CD8-positive, alpha-beta memory T cell (primary cell): ENCODE measurements at regions of chr13 and their contacts with region 1.

Region 1: GRCh38 chr13:102596147-102597028 is at the start of gene TPP2:
- DNase-seq: peak; percentile 96 to 99 (median 98)
- H3K4me3 ChIP-seq: peak within 1 kb of the TSS; percentile 98
- H3K4me3 Mint-ChIP-seq: peak within 1 kb of the TSS; percentile 97 to 100 (median 98)
- H3K27ac ChIP-seq: peak within 1 kb of the TSS; percentile 100
- H3K27ac Mint-ChIP-seq: peak within 1 kb of the TSS; percentile 99 to 100 (median 100)
- H3K4me1 ChIP-seq: peaks cover 48% of the 10 kb centered on the region
- H3K4me1 Mint-ChIP-seq: peaks cover 66 to 74% (median 73%) of the 10 kb centered on the region in 3 donors
- H3K27me3 ChIP-seq: no peaks in the 10 kb centered on the region
- H3K27me3 Mint-ChIP-seq: peaks cover 0 to 1% of the 10 kb centered on the region in 2 donors
- total RNA-seq, gene TPP2: 74.0 to 77.7 TPM

Region 2: GRCh38 chr13:102097708-102098107 is 498.7 kb before region 1 on chr13:
- CTCF ChIA-PET with region 1: no interaction called
- POLR2A ChIA-PET with region 1: no interaction called
- DNase-seq: no peak
- H3K4me3 ChIP-seq: no peak overlapping the region
- H3K4me3 Mint-ChIP-seq: no peak overlapping the region
- H3K27ac ChIP-seq: no peak overlapping the region
- H3K27ac Mint-ChIP-seq: no peak overlapping the region
- H3K4me1 ChIP-seq: no peaks in the 10 kb centered on the region
- H3K4me1 Mint-ChIP-seq: no peaks in the 10 kb centered on the region
- H3K27me3 ChIP-seq: no peaks in the 10 kb centered on the region
- H3K27me3 Mint-ChIP-seq: peaks cover 0 to 1% of the 10 kb centered on the region in 2 donors

Region 3: GRCh38 chr13:102555917-102556553 is 40.4 kb before region 1 on chr13:
- CTCF ChIA-PET with region 1: no interaction called
- POLR2A ChIA-PET with region 1: no interaction called
- DNase-seq: peak in 2 of 5 donors; percentile 1 to 19
- H3K4me3 ChIP-seq: no peak overlapping the region
- H3K4me3 Mint-ChIP-seq: no peak overlapping the region
- H3K27ac ChIP-seq: no peak overlapping the region
- H3K27ac Mint-ChIP-seq: no peak overlapping the region
- H3K4me1 ChIP-seq: no peaks in the 10 kb centered on the region
- H3K4me1 Mint-ChIP-seq: peaks cover 3 to 5% (median 5%) of the 10 kb centered on the region in 3 donors
- H3K27me3 ChIP-seq: no peaks in the 10 kb centered on the region
- H3K27me3 Mint-ChIP-seq: peaks cover 0 to 3% of the 10 kb centered on the region in 2 donors

Region 4: DNA sequence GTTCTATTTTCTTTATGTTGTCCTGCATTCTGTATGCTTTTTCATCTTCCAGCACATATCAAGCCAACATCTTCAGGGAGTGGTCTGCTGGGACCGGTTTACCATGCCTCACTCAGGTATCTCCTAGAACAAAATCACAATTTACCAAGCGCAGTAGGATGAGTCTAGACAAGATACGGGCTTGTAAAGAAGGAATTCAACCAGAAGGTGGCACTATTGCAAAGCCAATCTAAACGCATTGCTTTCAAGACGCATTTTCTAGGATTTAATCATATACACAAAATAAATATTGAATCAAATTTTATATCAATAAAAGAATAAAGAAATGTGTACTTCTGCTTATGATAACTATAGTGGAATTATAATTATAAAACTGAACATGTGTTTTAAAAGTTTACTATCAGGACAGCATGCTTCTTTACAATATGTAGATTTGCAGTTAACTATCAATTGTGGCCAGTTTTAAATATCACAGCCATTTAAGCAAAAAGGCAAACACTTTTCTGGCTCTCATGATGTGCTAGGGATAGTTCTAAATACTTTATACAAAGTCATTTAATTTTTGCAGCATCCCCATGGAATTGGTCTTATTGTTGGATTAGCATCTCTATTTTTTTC is 15.7 kb before region 1 on chr13:
- CTCF ChIA-PET with region 1: interaction called, 72 read pairs
- POLR2A ChIA-PET with region 1: interaction called, 10 read pairs
- DNase-seq: peak in 2 of 5 donors; percentile 44 to 54
- H3K4me3 ChIP-seq: no peak overlapping the region
- H3K4me3 Mint-ChIP-seq: no peak overlapping the region
- H3K27ac ChIP-seq: no peak overlapping the region
- H3K27ac Mint-ChIP-seq: peak overlapping the region in 1 of 8 donors; percentile 32
- H3K4me1 ChIP-seq: peaks cover 8% of the 10 kb centered on the region
- H3K4me1 Mint-ChIP-seq: peaks cover 13 to 17% (median 16%) of the 10 kb centered on the region in 3 donors
- H3K27me3 ChIP-seq: no peaks in the 10 kb centered on the region
- H3K27me3 Mint-ChIP-seq: peaks cover 13 to 19% of the 10 kb centered on the region in 2 donors

Region 5: GRCh38 chr13:102620516-102620915 is 24.1 kb after region 1 on chr13:
- CTCF ChIA-PET with region 1: interaction called, 17 read pairs
- POLR2A ChIA-PET with region 1: interaction called, 3 read pairs
- DNase-seq: no peak
- H3K4me3 ChIP-seq: no peak overlapping the region
- H3K4me3 Mint-ChIP-seq: no peak overlapping the region
- H3K27ac ChIP-seq: no peak overlapping the region
- H3K27ac Mint-ChIP-seq: peak overlapping the region in 2 of 8 donors; percentile 65 to 78
- H3K4me1 ChIP-seq: no peaks in the 10 kb centered on the region
- H3K4me1 Mint-ChIP-seq: peaks cover 10 to 22% (median 13%) of the 10 kb centered on the region in 3 donors
- H3K27me3 ChIP-seq: no peaks in the 10 kb centered on the region
- H3K27me3 Mint-ChIP-seq: no peaks in the 10 kb centered on the region

Region 6: GRCh38 chr13:102773441-102774215 is 177.2 kb after region 1 on chr13 and contains the start of gene TEX30:
- CTCF ChIA-PET with region 1: interaction called, 5 read pairs
- POLR2A ChIA-PET with region 1: interaction called, 21 read pairs
- DNase-seq: peak; percentile 80 to 91 (median 90)
- H3K4me3 ChIP-seq: peak within 1 kb of the TSS; percentile 87
- H3K4me3 Mint-ChIP-seq: peak within 1 kb of the TSS; percentile 88 to 96 (median 92)
- H3K27ac ChIP-seq: peak within 1 kb of the TSS; percentile 77
- H3K27ac Mint-ChIP-seq: peak within 1 kb of the TSS; percentile 65 to 98 (median 95)
- H3K4me1 ChIP-seq: peaks cover 5% of the 10 kb centered on the region
- H3K4me1 Mint-ChIP-seq: peaks cover 35 to 52% (median 49%) of the 10 kb centered on the region in 3 donors
- H3K27me3 ChIP-seq: no peaks in the 10 kb centered on the region
- H3K27me3 Mint-ChIP-seq: peaks cover 0 to 3% of the 10 kb centered on the region in 2 donors
- total RNA-seq, gene TEX30: 58.5 to 64.3 TPM

Region 7: DNA sequence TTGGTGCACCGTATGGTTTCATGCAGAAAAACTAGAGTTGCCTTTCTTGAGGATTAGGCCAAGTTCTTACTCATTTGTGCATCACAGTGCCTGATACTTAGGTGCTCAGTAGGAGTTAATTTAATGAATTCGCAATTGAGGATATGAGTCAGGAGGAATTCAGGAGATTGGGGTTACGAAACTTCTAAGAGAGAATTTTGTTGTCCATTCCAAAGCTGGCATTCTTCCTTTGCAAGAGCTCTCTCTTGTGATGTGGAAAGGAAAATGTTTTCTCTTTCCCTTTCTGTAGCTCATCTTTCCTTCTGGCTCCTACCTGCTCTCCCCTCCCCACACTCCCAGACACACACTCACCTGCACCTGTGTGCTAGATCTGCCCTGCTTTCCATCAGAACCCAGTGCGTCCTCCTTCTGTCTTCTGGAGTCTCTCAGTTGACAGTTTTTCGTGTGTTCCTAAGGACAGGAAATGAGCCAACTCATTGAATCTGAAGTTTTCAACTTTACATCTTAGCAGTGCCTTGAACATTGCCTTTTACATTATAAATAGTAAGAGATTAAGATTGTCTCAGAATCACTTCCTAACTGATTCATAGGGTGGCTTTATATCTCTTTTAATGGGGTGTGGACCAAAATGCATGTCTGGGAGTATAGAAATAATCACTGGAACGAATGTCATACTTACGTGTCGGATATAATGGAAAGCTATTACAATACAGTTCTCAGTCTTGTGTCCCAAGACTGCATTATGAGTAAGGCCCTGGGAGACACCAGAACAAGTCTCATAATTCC is 229.7 kb after region 1 on chr13:
- CTCF ChIA-PET with region 1: no interaction called
- POLR2A ChIA-PET with region 1: no interaction called
- DNase-seq: no peak
- H3K4me3 ChIP-seq: no peak overlapping the region
- H3K4me3 Mint-ChIP-seq: no peak overlapping the region
- H3K27ac ChIP-seq: no peak overlapping the region
- H3K27ac Mint-ChIP-seq: peak overlapping the region in 2 of 8 donors; percentile 45 to 52
- H3K4me1 ChIP-seq: no peaks in the 10 kb centered on the region
- H3K4me1 Mint-ChIP-seq: no peaks in the 10 kb centered on the region
- H3K27me3 ChIP-seq: no peaks in the 10 kb centered on the region
- H3K27me3 Mint-ChIP-seq: no peaks in the 10 kb centered on the region

Region 8: DNA sequence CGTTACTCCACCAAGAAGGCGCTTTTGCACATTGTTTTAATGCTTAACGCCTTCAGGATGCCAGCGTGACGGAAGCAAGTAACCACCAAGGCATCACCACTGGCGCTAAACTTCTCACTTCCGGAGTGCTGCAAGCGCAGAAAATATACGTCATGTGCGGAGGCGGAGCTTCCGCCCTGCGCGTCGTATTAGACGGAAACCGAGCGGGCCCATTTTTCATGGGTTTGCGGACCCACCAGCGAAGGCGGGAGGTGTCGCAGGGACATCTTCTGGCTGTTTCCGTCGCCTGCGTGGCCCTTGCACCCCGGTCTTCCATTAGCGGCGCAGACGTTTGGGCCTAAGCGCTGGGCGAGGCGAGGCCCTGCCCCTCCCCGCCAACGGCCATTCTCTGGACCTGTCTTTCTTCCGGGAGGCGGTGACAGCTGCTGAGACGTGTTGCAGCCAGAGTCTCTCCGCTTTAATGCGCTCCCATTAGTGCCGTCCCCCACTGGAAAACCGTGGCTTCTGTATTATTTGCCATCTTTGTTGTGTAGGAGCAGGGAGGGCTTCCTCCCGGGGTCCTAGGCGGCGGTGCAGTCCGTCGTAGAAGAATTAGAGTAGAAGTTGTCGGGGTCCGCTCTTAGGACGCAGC is 249.4 kb after region 1 on chr13 and contains the start of gene ERCC5:
- CTCF ChIA-PET with region 1: interaction called, 36 read pairs
- POLR2A ChIA-PET with region 1: interaction called, 171 read pairs
- DNase-seq: peak; percentile 88 to 97 (median 97)
- H3K4me3 ChIP-seq: peak within 1 kb of the TSS; percentile 97
- H3K4me3 Mint-ChIP-seq: peak within 1 kb of the TSS; percentile 91 to 99 (median 97)
- H3K27ac ChIP-seq: peak within 1 kb of the TSS; percentile 99
- H3K27ac Mint-ChIP-seq: peak within 1 kb of the TSS; percentile 93 to 100 (median 99)
- H3K4me1 ChIP-seq: peaks cover 42% of the 10 kb centered on the region
- H3K4me1 Mint-ChIP-seq: peaks cover 42 to 52% (median 51%) of the 10 kb centered on the region in 3 donors
- H3K27me3 ChIP-seq: no peaks in the 10 kb centered on the region
- H3K27me3 Mint-ChIP-seq: peaks cover 0 to 5% of the 10 kb centered on the region in 2 donors
- total RNA-seq, gene ERCC5: 48.0 to 48.8 TPM